ENCODE measurements at regions of chr16 and their contacts with region 1.

Region 1: GRCh38 chr16:72818236-72818845 is 229.6 kb downstream of the ZFHX3 start:
- DNase-seq: no peak

Region 2: DNA sequence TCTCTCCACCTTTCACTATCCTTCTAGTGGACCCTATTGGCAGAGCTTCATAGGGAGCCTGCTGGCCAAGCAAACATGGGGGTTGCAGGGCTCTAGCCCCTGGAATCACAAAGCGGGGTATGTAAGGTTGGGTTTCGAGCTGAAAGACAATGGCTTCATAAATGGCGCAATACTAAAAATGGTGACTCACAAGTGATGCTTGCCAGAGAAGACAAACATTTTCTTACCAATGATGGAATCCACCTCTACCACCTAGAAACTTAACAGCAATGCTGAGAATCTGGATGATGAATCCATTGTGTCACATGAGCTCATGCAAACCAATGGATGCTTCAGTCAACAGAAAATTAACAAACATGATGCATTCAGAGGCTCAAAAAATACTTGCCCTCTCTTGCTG is 1103.0 kb after region 1 on chr16:
- intact Hi-C with region 1: loop called in 1 of 2 experiments (anchors 5 kb)
- DNase-seq: no peak